ENCODE measurements at regions of chr16 and their contacts with region 1.

Region 1: GRCh38 chr16:89289428-89290395 is 72.2 kb downstream of the ZNF778 start:
- DNase-seq: peak; percentile 59 to 92
- H3K4me3 ChIP-seq: no peak overlapping the region
- H3K27ac ChIP-seq: no peak overlapping the region
- H3K4me1 ChIP-seq: peaks cover 16 to 47% (median 43%) of the 10 kb centered on the region in 4 experiments
- H3K27me3 ChIP-seq: no peaks in the 10 kb centered on the region
- CTCF ChIP-seq: peak; percentile 89 to 92 (median 92)
- EP300 ChIP-seq: no peak
- POLR2A ChIP-seq: no peak
- RAD21 ChIP-seq: peak; percentile 50 to 72; a peak in 3 of 4 replicates

Region 2: DNA sequence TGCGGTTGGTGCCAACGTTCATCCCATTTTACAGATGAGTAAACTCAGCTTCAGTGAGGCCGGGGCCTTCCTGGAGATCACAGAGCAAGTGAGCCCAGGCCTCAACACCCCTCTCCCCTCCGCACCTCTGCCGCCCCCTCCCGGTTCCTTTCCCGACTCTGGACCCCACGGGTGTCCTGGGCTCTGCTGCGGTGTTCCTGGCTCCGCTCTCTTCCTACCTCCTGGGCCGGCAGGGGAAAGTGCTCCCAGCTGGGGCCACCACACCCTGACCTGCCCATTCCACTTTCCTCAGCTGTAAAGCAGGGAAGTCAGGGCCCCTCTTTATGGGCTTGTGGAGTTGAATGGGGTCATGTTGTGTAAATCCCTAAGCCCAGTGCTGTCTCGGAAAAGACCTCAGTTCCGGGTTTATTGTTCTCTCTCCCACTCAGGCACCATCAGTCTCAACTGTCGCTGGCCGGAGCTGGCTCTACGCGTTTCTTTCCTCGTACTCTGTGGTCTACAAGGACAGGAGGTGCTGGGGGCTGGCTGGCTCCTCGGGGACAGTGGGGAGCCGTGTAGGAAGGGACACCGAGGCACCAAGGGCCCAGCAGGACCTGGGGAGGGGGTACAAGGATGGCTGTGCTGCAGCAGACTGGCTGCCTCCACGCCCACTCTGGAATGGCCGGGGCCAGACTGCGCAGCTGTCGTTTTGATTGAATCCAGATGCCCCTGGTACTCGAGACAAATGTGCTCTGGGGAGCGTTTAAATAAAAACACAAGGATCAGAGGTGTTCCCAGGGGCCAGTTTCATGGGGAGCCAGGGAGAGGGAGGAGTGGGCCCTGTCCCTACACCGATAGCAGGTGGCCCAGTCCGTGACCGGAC is 217.8 kb before region 1 on chr16:
- CTCF ChIA-PET with region 1: no interaction called
- POLR2A ChIA-PET with region 1: no interaction called
- DNase-seq: no peak
- H3K4me3 ChIP-seq: no peak overlapping the region
- H3K27ac ChIP-seq: no peak overlapping the region
- H3K4me1 ChIP-seq: no peaks in the 10 kb centered on the region
- H3K27me3 ChIP-seq: no peaks in the 10 kb centered on the region
- CTCF ChIP-seq: peak in 1 of 3 experiments; percentile 1; a peak in 1 of 4 replicates
- EP300 ChIP-seq: no peak
- POLR2A ChIP-seq: no peak
- RAD21 ChIP-seq: 0 out of 4 replicates have a peak, but pooled peaks have one; percentile 2 to 7

Region 3: DNA sequence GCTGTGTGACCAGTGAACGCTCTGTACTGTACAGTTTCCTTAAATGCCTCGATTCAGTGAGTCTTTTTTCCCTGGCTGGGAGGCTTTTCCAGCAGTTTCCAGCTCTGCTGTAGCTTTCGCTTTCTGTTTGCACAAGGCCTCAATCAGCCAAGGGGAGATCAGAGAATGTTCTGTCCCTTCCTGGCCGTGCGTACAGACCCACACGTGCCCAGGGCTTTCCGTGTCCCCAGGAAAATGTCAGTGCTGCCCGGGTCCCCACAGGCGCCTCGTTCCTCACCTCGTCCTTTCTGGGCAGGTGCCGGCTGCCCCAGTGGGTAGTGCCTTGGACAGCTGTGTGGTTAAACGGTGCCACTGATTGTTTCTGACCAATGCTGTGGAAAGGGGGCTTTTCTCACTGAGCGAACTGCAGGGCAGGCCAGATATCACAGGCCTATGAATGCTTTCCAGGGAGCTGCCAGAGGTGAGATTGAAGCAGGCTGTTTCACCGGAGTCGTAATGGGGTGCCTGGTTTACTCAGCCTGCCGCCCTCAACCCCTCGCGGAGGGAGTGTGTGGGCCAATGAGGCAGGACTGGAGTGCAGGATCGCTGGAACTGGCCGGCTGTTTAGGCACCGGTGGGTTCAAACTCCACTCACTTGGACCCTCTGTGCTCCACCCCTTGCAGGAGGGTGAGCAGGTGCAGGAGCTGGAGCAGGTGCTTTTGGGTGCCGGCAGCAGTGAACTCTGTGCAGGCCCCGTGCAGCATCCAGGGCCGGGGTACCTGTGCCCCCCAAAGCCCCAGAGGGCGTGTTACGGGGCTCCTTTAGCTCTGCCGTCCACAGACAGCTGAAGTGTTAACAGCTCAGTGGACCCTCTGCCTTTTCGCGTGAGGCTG is 27.8 kb before region 1 on chr16:
- CTCF ChIA-PET with region 1: interaction called, 26 read pairs
- POLR2A ChIA-PET with region 1: interaction called, 7 read pairs
- DNase-seq: no peak
- H3K4me3 ChIP-seq: no peak overlapping the region
- H3K27ac ChIP-seq: no peak overlapping the region
- H3K4me1 ChIP-seq: peaks cover 0 to 4% (median 0%) of the 10 kb centered on the region in 4 experiments; a peak in 1 of 7 replicates
- H3K27me3 ChIP-seq: peaks cover 4 to 13% (median 11%) of the 10 kb centered on the region in 4 experiments; a peak in 6 of 7 replicates
- CTCF ChIP-seq: no peak
- EP300 ChIP-seq: no peak
- POLR2A ChIP-seq: no peak
- RAD21 ChIP-seq: no peak

Region 4: GRCh38 chr16:89277641-89278341 is 11.9 kb before region 1 on chr16:
- CTCF ChIA-PET with region 1: interaction called, 28 read pairs
- POLR2A ChIA-PET with region 1: interaction called, 15 read pairs
- DNase-seq: no peak
- H3K4me3 ChIP-seq: no peak overlapping the region
- H3K27ac ChIP-seq: 0 out of 2 replicates have a peak overlapping the region, but pooled peaks have one; percentile 5
- H3K4me1 ChIP-seq: no peaks in the 10 kb centered on the region
- H3K27me3 ChIP-seq: no peaks in the 10 kb centered on the region
- CTCF ChIP-seq: no peak
- EP300 ChIP-seq: no peak
- POLR2A ChIP-seq: no peak
- RAD21 ChIP-seq: no peak

Region 5: GRCh38 chr16:89308390-89309333 is 18.9 kb after region 1 on chr16:
- CTCF ChIA-PET with region 1: interaction called, 42 read pairs
- POLR2A ChIA-PET with region 1: interaction called, 13 read pairs
- DNase-seq: peak in 1 of 2 experiments; percentile 90
- H3K4me3 ChIP-seq: no peak overlapping the region
- H3K27ac ChIP-seq: no peak overlapping the region
- H3K4me1 ChIP-seq: peaks cover 0 to 6% (median 0%) of the 10 kb centered on the region in 4 experiments; a peak in 1 of 7 replicates
- H3K27me3 ChIP-seq: no peaks in the 10 kb centered on the region
- CTCF ChIP-seq: peak; percentile 75 to 88 (median 87)
- EP300 ChIP-seq: no peak
- POLR2A ChIP-seq: no peak
- RAD21 ChIP-seq: peak; percentile 62 to 68

Region 6: GRCh38 chr16:89319883-89320781 is 30.4 kb after region 1 on chr16:
- CTCF ChIA-PET with region 1: interaction called, 11 read pairs
- POLR2A ChIA-PET with region 1: interaction called, 4 read pairs
- DNase-seq: no peak
- H3K4me3 ChIP-seq: no peak overlapping the region
- H3K27ac ChIP-seq: 0 out of 2 replicates have a peak overlapping the region, but pooled peaks have one; percentile 4
- H3K4me1 ChIP-seq: peaks cover 13 to 66% (median 45%) of the 10 kb centered on the region in 4 experiments
- H3K27me3 ChIP-seq: no peaks in the 10 kb centered on the region
- CTCF ChIP-seq: no peak
- EP300 ChIP-seq: no peak
- POLR2A ChIP-seq: no peak
- RAD21 ChIP-seq: no peak

Region 7: DNA sequence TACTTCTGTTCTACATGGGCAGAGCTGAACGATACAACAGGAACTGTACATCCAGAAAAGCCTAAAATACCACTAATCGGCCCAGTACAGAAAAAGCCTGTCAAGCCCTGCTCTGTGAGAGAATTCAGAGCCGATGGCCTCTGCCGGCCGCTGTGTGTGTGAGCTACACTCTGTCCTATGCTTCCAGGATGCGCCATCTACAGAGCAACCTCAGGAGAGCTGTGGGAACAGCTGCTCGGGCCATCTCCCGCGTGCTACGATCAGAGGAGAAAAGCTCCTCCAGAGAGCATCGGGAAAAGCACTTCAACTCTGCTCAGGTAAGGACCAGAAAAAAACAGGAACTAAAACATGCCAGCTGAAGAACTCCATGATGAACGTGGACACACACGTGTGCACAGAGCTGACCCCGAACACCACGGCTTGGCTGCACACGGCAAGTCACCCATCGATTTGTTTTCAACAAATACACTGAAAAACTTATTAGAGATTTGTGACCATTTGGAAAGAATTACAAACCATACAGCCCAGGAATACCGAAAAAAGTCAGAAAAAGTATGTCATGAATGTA is 84.8 kb after region 1 on chr16:
- CTCF ChIA-PET with region 1: interaction called, 10 read pairs
- POLR2A ChIA-PET with region 1: no interaction called
- DNase-seq: no peak
- H3K4me3 ChIP-seq: no peak overlapping the region
- H3K27ac ChIP-seq: no peak overlapping the region
- H3K4me1 ChIP-seq: peaks cover 3 to 16% (median 4%) of the 10 kb centered on the region in 4 experiments; a peak in 5 of 7 replicates
- H3K27me3 ChIP-seq: no peaks in the 10 kb centered on the region
- CTCF ChIP-seq: peak; percentile 22 to 41 (median 37); a peak in 3 of 4 replicates
- EP300 ChIP-seq: no peak
- POLR2A ChIP-seq: no peak
- RAD21 ChIP-seq: peak; percentile 29 to 43; a peak in 3 of 4 replicates

Measured in H1 (cell line).